Transverse colon (tissue), 4 donors: ENCODE measurements at regions of chr3 and their contacts with region 1.

Region 1: DNA sequence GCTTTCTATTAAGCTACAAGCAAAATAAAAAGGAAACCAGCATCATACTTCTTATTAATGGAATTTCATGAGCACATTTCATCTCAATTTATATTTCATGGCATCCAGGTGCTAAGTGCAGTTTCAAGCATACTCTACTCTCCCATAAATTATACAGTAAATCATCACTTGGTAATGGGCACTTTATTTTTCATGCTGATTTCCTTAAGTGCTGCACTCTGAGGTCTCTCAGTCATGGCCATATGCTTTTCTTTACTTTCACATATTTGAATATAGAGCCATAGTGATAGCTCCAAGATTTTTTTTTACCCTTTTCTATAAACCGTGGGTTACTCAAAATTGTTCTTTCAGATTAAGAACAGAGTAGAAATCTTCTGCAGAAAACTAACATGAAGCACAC is 1505.7 kb upstream of the CADM2 start:
- DNase-seq: no peak
- H3K4me3 ChIP-seq: no peak overlapping the region
- H3K27ac ChIP-seq: no peak overlapping the region
- H3K4me1 ChIP-seq: no peaks in the 10 kb centered on the region
- H3K27me3 ChIP-seq: no peaks in the 10 kb centered on the region
- CTCF ChIP-seq: no peak
- EP300 ChIP-seq: no peak
- POLR2A ChIP-seq: no peak

Region 2: GRCh38 chr3:83438188-83438587 is 14.9 kb before region 1 on chr3:
- in situ Hi-C with region 1: no loop called
- intact Hi-C with region 1: loop called (anchors 2 kb)
- DNase-seq: no peak
- H3K4me3 ChIP-seq: no peak overlapping the region
- H3K27ac ChIP-seq: no peak overlapping the region
- H3K4me1 ChIP-seq: no peaks in the 10 kb centered on the region
- H3K27me3 ChIP-seq: no peaks in the 10 kb centered on the region
- CTCF ChIP-seq: no peak
- EP300 ChIP-seq: no peak
- POLR2A ChIP-seq: no peak